CD8-positive, alpha-beta memory T cell (primary cell): ENCODE measurements at regions of chr4 and their contacts with region 1.

Region 1: DNA sequence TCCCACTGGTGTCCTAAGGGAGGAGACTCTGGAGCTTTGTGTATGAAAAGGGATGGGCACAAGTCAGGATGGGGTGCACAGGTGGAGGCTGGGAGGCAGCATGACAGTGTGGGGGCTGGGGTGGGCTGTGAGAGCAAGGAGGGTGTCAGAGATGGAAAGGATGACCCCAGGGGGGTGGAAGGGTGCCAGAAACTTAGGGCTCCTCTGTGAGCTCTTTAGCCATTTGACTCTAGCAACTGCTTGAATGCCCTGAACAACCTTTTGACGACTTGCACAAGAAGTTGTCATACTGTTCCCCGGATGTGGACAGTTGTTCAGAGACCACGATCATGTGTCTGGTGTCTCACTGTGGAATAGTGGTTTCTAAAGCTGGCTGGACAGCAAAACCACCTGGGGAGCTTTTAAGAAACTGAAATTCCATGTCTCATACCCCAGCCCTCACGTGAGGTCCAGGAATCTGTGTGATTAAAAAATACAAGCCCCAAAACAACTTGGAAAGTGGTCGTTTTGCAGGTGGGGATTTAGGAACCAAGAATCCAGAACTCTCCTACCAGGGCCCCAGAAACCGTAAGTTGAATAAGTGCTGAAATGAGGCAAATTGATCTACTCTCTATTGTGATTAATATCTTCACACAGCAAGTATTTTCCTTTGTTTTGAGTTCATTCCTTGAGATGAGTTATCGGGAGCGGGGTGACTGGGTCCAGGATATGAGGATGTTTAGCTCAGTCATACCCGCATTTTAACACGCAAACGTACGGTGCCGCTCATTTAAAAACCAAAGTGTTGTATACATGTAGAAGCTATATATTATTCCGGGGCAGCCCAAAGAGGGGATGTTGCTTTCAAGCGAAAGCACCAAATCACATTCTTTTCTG is 3.4 kb downstream of the RHOH start:
- DNase-seq: peak; percentile 38 to 81 (median 63)
- H3K4me3 ChIP-seq: peak overlapping the region; percentile 93
- H3K4me3 Mint-ChIP-seq: peak overlapping the region; percentile 93 to 100 (median 97)
- H3K27ac ChIP-seq: peak overlapping the region; percentile 96
- H3K27ac Mint-ChIP-seq: peak overlapping the region; percentile 94 to 100 (median 99)
- H3K4me1 ChIP-seq: peaks cover 38% of the 10 kb centered on the region
- H3K4me1 Mint-ChIP-seq: peaks cover 47 to 70% (median 58%) of the 10 kb centered on the region in 3 donors
- H3K27me3 ChIP-seq: no peaks in the 10 kb centered on the region
- H3K27me3 Mint-ChIP-seq: peaks cover 0 to 1% of the 10 kb centered on the region in 2 donors

Region 2: DNA sequence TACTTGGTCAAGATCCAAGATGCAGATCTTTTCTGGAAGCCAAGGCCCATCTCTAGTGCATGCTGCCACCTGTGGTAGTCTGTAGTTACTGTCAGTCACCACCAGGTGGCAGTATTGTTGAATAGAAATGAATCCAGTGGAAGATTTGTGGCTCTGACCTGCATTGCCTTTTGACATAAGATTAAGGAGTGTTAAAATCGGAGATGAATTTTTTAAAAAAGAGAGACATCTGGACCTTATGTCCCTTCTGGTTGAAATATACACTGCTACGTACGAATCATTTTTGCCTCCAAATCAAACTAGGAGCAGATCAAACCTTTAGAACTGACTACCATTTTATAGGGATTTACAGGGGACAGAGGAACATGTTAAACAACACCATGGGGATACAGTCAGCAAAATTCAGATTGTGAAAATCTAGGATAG is 50.3 kb before region 1 on chr4:
- CTCF ChIA-PET with region 1: interaction called, 10 read pairs
- POLR2A ChIA-PET with region 1: interaction called, 3 read pairs
- DNase-seq: peak; percentile 51 to 79 (median 70)
- H3K4me3 ChIP-seq: no peak overlapping the region
- H3K4me3 Mint-ChIP-seq: no peak overlapping the region
- H3K27ac ChIP-seq: no peak overlapping the region
- H3K27ac Mint-ChIP-seq: peak overlapping the region; percentile 33 to 90 (median 60)
- H3K4me1 ChIP-seq: peaks cover 20% of the 10 kb centered on the region
- H3K4me1 Mint-ChIP-seq: peaks cover 22 to 37% (median 34%) of the 10 kb centered on the region in 3 donors
- H3K27me3 ChIP-seq: no peaks in the 10 kb centered on the region
- H3K27me3 Mint-ChIP-seq: no peaks in the 10 kb centered on the region

Region 3: DNA sequence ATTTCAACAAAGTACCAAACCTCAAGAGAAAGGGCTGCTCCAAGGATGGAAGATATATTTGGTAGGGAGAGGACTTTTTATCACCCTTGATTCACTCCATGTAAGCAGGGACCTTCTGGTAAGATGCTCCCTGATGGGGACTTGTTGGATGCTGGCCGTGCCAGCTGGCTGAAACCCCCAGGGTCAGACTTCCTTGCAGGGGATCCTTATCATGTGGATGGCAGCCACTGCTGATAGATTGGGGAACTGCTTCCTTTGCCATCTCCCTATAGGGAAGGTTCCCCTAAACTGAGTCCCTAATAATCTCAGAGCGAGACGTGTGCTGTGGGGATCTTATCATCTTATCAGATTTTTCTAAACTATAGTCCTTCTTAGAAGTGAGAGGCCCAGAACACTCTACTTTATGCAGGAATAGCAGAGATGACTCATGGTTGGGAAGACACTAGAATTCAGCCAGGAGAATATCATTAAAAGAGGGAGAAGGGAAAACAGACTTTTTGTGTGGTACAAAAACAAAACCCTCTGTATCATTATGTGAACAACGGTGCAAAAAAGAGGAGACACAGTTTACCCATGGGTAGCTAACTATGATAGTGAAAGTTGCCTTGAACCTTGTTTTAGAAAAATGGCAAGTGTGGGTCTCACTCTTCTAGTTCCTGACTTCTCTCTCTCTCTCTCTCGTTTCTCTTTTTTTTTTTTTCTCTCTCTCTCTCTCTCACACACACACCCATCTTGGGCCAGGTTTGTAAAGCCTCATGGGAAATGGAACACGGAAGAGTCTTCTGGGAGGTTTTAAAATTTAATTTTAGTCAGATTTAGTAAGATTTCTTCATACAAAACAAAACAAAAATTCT is 12.7 kb after region 1 on chr4:
- CTCF ChIA-PET with region 1: interaction called, 194 read pairs
- POLR2A ChIA-PET with region 1: interaction called, 39 read pairs
- DNase-seq: no peak
- H3K4me3 ChIP-seq: peak overlapping the region; percentile 21
- H3K4me3 Mint-ChIP-seq: peak overlapping the region; percentile 51 to 93 (median 78)
- H3K27ac ChIP-seq: no peak overlapping the region
- H3K27ac Mint-ChIP-seq: peak overlapping the region; percentile 85 to 97 (median 90)
- H3K4me1 ChIP-seq: peaks cover 93% of the 10 kb centered on the region
- H3K4me1 Mint-ChIP-seq: peaks cover 90 to 97% (median 94%) of the 10 kb centered on the region in 3 donors
- H3K27me3 ChIP-seq: no peaks in the 10 kb centered on the region
- H3K27me3 Mint-ChIP-seq: peaks cover 0 to 3% of the 10 kb centered on the region in 2 donors

Region 4: DNA sequence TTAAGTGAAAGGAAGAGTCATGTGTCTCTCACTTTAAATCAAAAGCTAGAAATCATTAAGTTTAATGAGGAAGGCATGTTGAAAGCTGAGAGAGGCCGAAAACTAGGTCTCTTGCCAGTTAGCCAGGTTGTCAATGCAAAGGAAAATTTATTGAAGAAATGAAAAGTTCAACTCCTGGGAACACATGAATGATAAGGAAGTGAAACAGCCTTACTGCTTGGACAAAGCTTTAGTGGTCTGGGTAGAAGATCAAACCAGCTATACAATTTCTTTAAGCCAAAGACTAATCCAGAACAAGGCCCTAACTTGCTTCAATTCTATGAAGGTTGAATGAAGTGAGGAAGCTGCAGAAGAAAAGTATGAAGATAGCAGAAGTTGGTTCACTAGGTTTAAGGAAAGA is 21.5 kb after region 1 on chr4:
- CTCF ChIA-PET with region 1: interaction called, 194 read pairs
- POLR2A ChIA-PET with region 1: interaction called, 18 read pairs
- DNase-seq: no peak
- H3K4me3 ChIP-seq: no peak overlapping the region
- H3K4me3 Mint-ChIP-seq: peak overlapping the region; percentile 52 to 85 (median 80)
- H3K27ac ChIP-seq: no peak overlapping the region
- H3K27ac Mint-ChIP-seq: peak overlapping the region; percentile 74 to 98 (median 89)
- H3K4me1 ChIP-seq: peaks cover 93% of the 10 kb centered on the region
- H3K4me1 Mint-ChIP-seq: peaks cover 88 to 95% (median 95%) of the 10 kb centered on the region in 3 donors
- H3K27me3 ChIP-seq: no peaks in the 10 kb centered on the region
- H3K27me3 Mint-ChIP-seq: no peaks in the 10 kb centered on the region